SK-N-SH (cell line): ENCODE measurements at regions of chr3 and their contacts with region 1.

Region 1: DNA sequence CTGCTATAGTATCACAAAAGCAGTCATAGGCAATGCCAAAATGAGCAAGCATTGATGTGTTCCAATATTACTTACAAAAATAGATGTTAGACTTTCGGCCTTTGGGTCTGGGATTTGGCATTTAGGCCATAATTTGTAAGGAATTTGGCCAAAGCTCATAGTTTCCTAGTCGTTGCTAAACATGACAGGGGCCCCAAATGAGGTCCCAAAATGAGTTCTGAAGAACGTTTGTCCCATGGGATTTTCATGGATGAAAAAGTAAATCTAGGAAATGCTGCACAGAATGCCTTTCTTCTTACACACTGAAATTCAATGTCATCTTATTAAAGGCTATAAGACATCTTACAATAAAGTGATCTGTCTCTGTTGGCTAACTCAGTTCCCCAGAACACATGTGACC is 456.0 kb downstream of the CNTN4 start:
- DNase-seq: no peak
- H3K4me3 ChIP-seq: no peak overlapping the region
- H3K27ac ChIP-seq: no peak overlapping the region
- H3K4me1 ChIP-seq: no peaks in the 10 kb centered on the region
- H3K27me3 ChIP-seq: no peaks in the 10 kb centered on the region
- CTCF ChIP-seq: no peak
- EP300 ChIP-seq: no peak
- RAD21 ChIP-seq: no peak

Region 2: DNA sequence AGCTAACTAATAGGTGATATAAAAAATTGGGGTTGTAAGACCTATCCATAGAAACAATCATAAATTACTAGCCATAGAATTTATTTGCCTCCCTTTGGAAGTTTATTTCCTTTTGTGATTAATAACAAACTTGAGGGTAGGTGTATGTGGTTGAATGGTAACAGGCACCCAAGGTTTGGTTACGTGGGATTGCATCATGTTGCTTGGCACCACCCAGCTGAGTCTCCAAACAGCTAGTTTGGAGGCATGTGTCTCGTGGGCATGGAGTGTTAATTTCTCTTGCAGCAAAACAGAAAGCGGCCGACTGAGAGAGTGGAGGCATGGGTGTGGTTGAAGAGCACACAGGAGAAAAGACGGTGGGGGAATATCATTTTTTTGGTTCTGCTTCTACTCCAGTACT is 14.5 kb before region 1 on chr3:
- CTCF ChIA-PET with region 1: no interaction called
- POLR2A ChIA-PET with region 1: no interaction called
- DNase-seq: no peak
- H3K4me3 ChIP-seq: no peak overlapping the region
- H3K27ac ChIP-seq: no peak overlapping the region
- H3K4me1 ChIP-seq: no peaks in the 10 kb centered on the region; a peak in 1 of 4 replicates
- H3K27me3 ChIP-seq: no peaks in the 10 kb centered on the region
- CTCF ChIP-seq: no peak
- EP300 ChIP-seq: no peak
- RAD21 ChIP-seq: no peak

Region 3: DNA sequence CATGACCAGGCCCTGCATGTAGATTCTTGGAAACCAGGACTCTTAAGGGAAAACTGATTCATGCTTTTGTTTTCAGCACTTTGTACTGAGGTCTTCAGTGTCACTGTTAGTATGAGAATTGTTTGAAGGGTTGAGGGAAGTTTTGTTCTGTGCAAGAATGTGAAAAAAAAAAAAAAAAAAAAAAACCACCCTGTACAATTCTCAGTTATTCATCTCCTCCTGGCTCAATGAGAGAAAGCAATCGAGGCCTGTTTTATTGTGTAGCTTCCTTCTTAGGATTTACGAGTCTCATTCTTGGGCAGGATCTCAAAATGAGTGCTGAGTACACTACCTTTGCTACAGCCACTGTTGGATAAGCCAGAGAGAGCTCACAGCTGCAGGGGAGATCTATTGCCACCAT is 13.5 kb after region 1 on chr3:
- CTCF ChIA-PET with region 1: interaction called, 12 read pairs
- POLR2A ChIA-PET with region 1: no interaction called
- DNase-seq: no peak
- H3K4me3 ChIP-seq: no peak overlapping the region
- H3K27ac ChIP-seq: no peak overlapping the region
- H3K4me1 ChIP-seq: no peaks in the 10 kb centered on the region; a peak in 1 of 4 replicates
- H3K27me3 ChIP-seq: no peaks in the 10 kb centered on the region
- CTCF ChIP-seq: no peak
- EP300 ChIP-seq: no peak
- RAD21 ChIP-seq: no peak

Region 4: GRCh38 chr3:2839876-2840275 is 285.2 kb after region 1 on chr3:
- CTCF ChIA-PET with region 1: no interaction called
- POLR2A ChIA-PET with region 1: no interaction called
- DNase-seq: no peak
- H3K4me3 ChIP-seq: no peak overlapping the region
- H3K27ac ChIP-seq: no peak overlapping the region
- H3K4me1 ChIP-seq: peaks cover 0 to 11% of the 10 kb centered on the region in 2 experiments; a peak in 2 of 4 replicates
- H3K27me3 ChIP-seq: no peaks in the 10 kb centered on the region
- CTCF ChIP-seq: no peak
- EP300 ChIP-seq: no peak
- RAD21 ChIP-seq: no peak